Endothelial cell of umbilical vein (primary cell): ENCODE measurements at regions of chr9 and their contacts with region 1.

Region 1: DNA sequence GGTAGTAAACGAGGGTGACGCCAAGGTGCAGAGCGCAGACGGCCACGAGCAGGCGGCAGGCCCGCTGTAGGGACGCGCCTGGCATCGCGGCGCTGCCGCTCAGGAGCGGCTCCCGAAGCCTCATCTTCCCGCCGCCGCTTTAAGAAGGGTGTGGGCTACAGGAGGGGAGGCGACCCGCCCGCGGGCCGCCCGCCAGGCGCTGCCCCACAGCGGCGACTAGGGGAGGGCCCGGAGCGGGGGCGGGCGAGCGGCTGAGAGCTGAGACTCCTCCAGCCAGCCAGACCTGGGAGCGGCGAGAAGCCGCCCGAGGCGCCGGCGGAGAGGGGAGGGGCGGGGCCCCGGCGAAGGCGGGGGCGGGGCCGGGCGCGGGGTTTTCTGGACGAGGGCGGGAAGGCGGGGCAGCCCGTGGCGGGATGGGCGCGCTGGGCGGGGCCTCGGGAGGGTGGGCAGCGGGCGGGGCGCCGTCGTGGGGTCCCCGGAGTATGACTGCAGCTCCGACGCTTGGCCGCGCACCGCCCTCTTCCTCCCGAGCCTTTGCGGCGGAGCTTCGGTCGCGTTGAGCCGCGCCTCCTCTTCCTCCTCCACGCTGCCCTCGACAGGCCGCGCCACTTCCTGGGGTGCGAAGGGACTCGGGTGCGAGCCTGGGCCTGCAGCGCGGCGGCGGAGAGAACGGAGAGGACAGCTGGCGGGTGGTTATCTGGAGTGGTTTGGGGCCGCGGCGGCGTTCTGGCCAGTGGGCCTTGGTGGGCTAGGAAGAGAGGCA is at the start of gene B4GALT1:
- DNase-seq: peak; percentile 93
- H3K4me3 ChIP-seq: peak within 1 kb of the TSS; percentile 75 to 82 (median 76)
- H3K27ac ChIP-seq: peak within 1 kb of the TSS; percentile 78
- H3K4me1 ChIP-seq: peaks cover 37% of the 10 kb centered on the region
- H3K27me3 ChIP-seq: no peaks in the 10 kb centered on the region
- CTCF ChIP-seq: no peak
- POLR2A ChIP-seq: peak; percentile 76
- total RNA-seq, gene B4GALT1: 65.6 and 66.5 TPM in 2 replicates

Region 2: GRCh38 chr9:33024966-33025571 is 142.2 kb before region 1 on chr9 and contains the start of gene DNAJA1:
- CTCF ChIA-PET with region 1: no interaction called
- POLR2A ChIA-PET with region 1: interaction called, 4 read pairs
- dilution Hi-C with region 1: no loop called
- intact Hi-C with region 1: loop called (anchors 5 kb)
- DNase-seq: peak; percentile 92
- H3K4me3 ChIP-seq: peak within 1 kb of the TSS; percentile 57 to 100 (median 99)
- H3K27ac ChIP-seq: peak within 1 kb of the TSS; percentile 95
- H3K4me1 ChIP-seq: peaks cover 40% of the 10 kb centered on the region
- H3K27me3 ChIP-seq: no peaks in the 10 kb centered on the region
- CTCF ChIP-seq: no peak
- POLR2A ChIP-seq: peak; percentile 99
- total RNA-seq, gene DNAJA1: 177 and 182 TPM in 2 replicates

Region 3: DNA sequence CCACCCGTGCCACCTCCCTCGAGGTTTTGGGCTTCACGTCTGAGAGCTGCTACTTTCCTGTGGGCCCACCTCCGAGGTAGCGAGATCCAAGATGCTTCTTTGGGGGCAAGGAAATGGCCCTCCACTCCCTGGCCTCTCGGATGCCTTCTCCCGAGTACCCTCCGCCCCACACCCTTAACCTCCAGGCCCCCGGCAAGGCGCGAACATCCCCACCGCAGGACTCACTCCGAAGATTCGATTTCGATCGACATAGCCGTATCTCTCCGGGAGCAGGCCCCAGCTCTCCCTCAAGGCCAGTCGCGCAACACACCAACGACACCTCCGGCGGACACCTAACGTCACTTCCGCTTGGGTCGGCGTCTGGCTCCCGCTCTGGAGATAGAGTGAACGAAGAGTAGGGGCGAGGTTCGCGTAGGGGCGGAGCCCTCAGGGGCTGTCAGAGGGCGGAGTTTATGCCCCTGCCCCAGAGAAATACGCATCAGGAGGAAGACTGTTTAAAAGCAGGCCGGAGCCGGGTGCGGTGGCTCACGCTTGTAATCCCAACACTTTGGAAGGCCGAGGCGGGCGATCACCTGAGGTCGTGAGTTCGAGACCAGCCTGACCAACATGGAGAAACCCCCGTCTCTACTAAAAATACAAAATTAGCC is 90.7 kb before region 1 on chr9 and contains the start of gene SMU1:
- CTCF ChIA-PET with region 1: interaction called, 6 read pairs
- POLR2A ChIA-PET with region 1: no interaction called
- dilution Hi-C with region 1: no loop called
- intact Hi-C with region 1: loop called (anchors 1 kb)
- DNase-seq: peak; percentile 99
- H3K4me3 ChIP-seq: peak within 1 kb of the TSS; percentile 54 to 87 (median 59)
- H3K27ac ChIP-seq: peak within 1 kb of the TSS; percentile 83
- H3K4me1 ChIP-seq: peaks cover 15% of the 10 kb centered on the region
- H3K27me3 ChIP-seq: no peaks in the 10 kb centered on the region
- CTCF ChIP-seq: no peak
- POLR2A ChIP-seq: peak; percentile 69
- total RNA-seq, gene SMU1: 21.7 and 22.2 TPM in 2 replicates

Region 4: GRCh38 chr9:33106827-33107621 is 60.2 kb before region 1 on chr9:
- CTCF ChIA-PET with region 1: no interaction called
- POLR2A ChIA-PET with region 1: no interaction called
- dilution Hi-C with region 1: no loop called
- intact Hi-C with region 1: loop called (anchors 1 kb)
- DNase-seq: peak; percentile 85
- H3K4me3 ChIP-seq: no peak overlapping the region
- H3K27ac ChIP-seq: peak overlapping the region; percentile 87
- H3K4me1 ChIP-seq: peaks cover 22% of the 10 kb centered on the region
- H3K27me3 ChIP-seq: no peaks in the 10 kb centered on the region
- CTCF ChIP-seq: no peak
- POLR2A ChIP-seq: peak; percentile 41

Region 5: GRCh38 chr9:33151007-33151557 is 16.1 kb before region 1 on chr9:
- CTCF ChIA-PET with region 1: interaction called, 13 read pairs
- POLR2A ChIA-PET with region 1: interaction called, 3 read pairs
- dilution Hi-C with region 1: no loop called
- intact Hi-C with region 1: no loop called
- DNase-seq: peak; percentile 86
- H3K4me3 ChIP-seq: no peak overlapping the region
- H3K27ac ChIP-seq: peak overlapping the region; percentile 53
- H3K4me1 ChIP-seq: peaks cover 33% of the 10 kb centered on the region
- H3K27me3 ChIP-seq: no peaks in the 10 kb centered on the region
- CTCF ChIP-seq: no peak
- POLR2A ChIP-seq: no peak

Region 6: DNA sequence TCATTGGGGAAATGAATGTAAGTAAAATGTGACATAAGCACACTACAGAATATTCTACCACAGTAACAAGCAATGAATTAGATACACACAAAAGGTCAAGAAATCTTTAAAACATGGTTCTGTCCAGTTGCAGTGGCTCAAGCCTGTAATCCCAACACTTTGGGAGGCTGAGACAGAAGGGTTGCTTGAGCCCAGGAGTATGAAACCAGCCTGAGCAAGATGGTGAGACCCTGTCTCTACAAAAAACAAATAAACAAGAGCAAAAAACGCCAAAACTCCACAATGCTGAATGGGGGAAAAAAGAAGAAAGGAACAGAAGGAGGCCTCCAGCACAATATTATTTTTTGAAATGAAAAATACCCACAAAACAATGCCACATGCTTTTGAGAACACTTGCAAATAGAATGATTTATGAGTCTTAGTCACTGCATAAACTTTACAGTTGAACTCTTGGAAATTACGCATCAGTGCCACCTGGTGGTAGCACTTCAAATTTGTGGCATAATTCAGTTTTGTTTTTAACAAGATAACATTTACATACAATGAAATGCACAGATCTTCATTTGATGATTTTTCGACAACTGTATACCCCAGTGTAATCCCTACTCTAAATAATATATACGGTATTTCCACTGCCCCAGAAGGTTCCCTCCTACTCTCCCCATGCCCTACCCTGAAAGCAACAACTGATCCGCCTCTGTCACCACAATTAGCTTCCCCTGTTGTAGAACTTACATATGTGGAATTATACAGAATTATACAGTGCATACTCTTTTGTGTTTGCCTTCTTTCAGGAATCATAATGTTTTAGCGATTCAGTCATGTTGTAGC is 58.3 kb after region 1 on chr9:
- CTCF ChIA-PET with region 1: interaction called, 17 read pairs
- POLR2A ChIA-PET with region 1: no interaction called
- dilution Hi-C with region 1: no loop called
- intact Hi-C with region 1: loop called (anchors 1 kb)
- DNase-seq: peak; percentile 91
- H3K4me3 ChIP-seq: no peak overlapping the region
- H3K27ac ChIP-seq: no peak overlapping the region
- H3K4me1 ChIP-seq: peaks cover 9% of the 10 kb centered on the region
- H3K27me3 ChIP-seq: no peaks in the 10 kb centered on the region
- CTCF ChIP-seq: peak; percentile 41 to 55
- POLR2A ChIP-seq: no peak

Region 7: DNA sequence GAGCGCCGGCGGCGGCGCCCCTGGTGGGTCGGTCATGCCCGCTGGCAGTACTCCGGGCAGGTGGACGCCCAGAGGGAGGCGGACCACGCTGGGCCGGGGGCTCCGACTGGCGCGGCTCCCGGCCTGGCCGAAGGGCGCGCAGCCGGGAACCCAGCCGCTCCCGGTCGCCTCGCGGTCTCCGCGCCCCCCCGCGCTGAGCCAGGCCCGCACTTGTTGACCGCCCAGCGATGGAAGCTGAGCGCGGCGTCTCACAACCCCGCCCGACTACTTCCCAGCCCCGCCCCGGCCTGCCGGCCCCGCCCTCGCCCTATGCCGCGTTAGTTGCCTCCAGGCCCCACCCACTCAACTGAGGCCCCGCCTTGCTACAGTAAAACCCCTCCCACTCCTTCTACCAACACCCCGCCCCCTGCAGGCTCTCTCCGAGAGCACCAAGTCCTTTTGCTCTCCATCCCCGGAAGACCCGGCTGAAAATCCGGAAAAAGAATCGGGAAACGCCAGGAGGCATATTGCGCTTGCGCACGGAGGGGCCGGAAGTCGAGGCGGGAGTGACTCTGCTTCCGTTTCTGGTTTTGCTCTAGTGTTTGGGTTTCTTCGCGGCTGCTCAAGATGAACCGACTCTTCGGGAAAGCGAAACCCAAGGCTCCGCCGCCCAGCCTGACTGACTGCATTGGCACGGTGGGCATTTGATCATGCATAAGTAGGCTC is 97.4 kb after region 1 on chr9 and contains the starts of genes BAG1 and CHMP5:
- CTCF ChIA-PET with region 1: no interaction called
- POLR2A ChIA-PET with region 1: no interaction called
- dilution Hi-C with region 1: no loop called
- intact Hi-C with region 1: loop called (anchors 1 kb)
- DNase-seq: peak; percentile 100
- H3K4me3 ChIP-seq: peak within 1 kb of the TSS; percentile 37 to 96 (median 75)
- H3K27ac ChIP-seq: peak within 1 kb of the TSS; percentile 34
- H3K4me1 ChIP-seq: peaks cover 15% of the 10 kb centered on the region
- H3K27me3 ChIP-seq: no peaks in the 10 kb centered on the region
- CTCF ChIP-seq: peak; percentile 9 to 37
- POLR2A ChIP-seq: peak; percentile 85
- total RNA-seq, gene BAG1: 87.4 and 98.7 TPM in 2 replicates
- total RNA-seq, gene CHMP5: 54.5 and 55.8 TPM in 2 replicates